WTC11 (cell line): ENCODE measurements at regions of chr11 and their contacts with region 1.

Region 1: GRCh38 chr11:32448232-32448631 is 12.9 kb upstream of the WT1 start:
- DNase-seq: no peak
- ATAC-seq: peak; percentile 73
- H3K4me3 Mint-ChIP-seq: no peak overlapping the region
- H3K27ac Mint-ChIP-seq: no peak overlapping the region
- H3K4me1 Mint-ChIP-seq: peaks cover 5% of the 10 kb centered on the region
- H3K27me3 Mint-ChIP-seq: peaks cover 27% of the 10 kb centered on the region
- CTCF ChIP-seq: no peak

Region 2: DNA sequence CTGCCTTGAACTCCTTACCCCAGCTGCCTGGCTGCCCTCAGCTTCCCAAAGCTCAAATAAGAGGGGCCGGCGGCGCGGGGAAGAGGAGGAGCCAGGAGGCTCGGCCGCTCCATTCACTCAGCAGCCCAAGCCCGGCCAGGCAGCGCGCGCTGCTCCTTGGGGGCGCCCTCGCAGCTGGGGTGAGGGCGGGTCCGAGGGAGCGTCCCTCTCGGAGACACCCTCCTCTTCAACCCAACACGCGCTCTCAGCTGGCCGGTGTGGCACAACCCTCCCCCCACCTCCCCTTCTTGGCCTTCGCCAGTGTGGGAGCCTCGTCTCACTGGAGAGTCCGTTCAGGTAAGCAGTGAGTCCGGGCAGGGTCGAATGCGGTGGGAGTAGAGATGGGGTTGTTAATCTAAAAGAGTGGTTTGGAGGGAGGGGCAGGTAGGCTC is 12.7 kb before region 1 on chr11 and contains the start of gene WT1:
- CTCF ChIA-PET with region 1: interaction called, 14 read pairs
- POLR2A ChIA-PET with region 1: no interaction called
- DNase-seq: peak; percentile 76
- ATAC-seq: peak; percentile 51
- H3K4me3 Mint-ChIP-seq: peak within 1 kb of the TSS; percentile 68
- H3K27ac Mint-ChIP-seq: no peak within 1 kb of the TSS
- H3K4me1 Mint-ChIP-seq: peaks cover 57% of the 10 kb centered on the region
- H3K27me3 Mint-ChIP-seq: peaks cover 99% of the 10 kb centered on the region
- CTCF ChIP-seq: no peak
- total RNA-seq, gene WT1: 0.09 to 0.16 TPM in 2 of 3 replicates, not detected in the other